ENCODE measurements at regions of chr17 and their contacts with region 1.

Region 1: GRCh38 chr17:57455063-57455914 is 199.0 kb downstream of the MSI2 start:
- DNase-seq: peak; percentile 94
- ATAC-seq: peak; percentile 91
- H3K4me3 ChIP-seq: no peak overlapping the region
- H3K27ac ChIP-seq: peak overlapping the region; percentile 98
- H3K4me1 ChIP-seq: peaks cover 73% of the 10 kb centered on the region
- H3K27me3 ChIP-seq: no peaks in the 10 kb centered on the region
- CTCF ChIP-seq: no peak
- EP300 ChIP-seq: peak; percentile 95 to 99
- POLR2A ChIP-seq: peak; percentile 59
- RAD21 ChIP-seq: peak; percentile 35

Region 2: DNA sequence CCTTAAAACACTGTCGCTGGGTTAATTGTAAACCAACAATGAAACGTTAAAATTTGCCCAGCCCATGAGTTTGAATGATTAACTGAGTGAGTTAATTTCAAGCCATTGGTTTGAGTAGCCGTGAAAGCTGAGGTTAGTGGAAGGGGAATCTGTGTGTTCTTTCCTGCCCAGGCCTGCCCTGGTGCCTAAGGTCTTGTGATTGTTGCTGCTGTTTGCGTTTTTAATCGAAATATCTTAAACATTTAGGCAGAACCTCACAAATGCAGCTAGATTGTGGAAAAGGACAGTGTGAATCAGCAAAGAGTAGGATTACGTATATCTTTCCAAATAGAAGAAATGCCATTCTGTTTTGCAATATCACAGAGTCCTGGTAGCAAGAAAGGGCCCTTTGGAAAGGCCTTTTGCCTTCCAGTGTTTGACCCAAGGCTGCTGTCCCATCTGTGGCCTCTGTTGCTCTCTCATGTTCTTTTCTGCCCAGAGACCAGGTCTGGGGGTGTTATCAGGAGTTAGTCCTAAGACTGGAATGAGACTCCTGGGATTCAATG is 85.2 kb before region 1 on chr17:
- CTCF ChIA-PET with region 1: interaction called, 8 read pairs
- POLR2A ChIA-PET with region 1: interaction called, 5 read pairs
- RAD21 ChIA-PET with region 1: interaction called, 6 read pairs
- SMC1A ChIA-PET with region 1: interaction called, 22 read pairs
- in situ Hi-C with region 1: no loop called
- intact Hi-C with region 1: no loop called
- DNase-seq: no peak
- ATAC-seq: peak; percentile 84
- H3K4me3 ChIP-seq: no peak overlapping the region
- H3K27ac ChIP-seq: peak overlapping the region; percentile 75
- H3K4me1 ChIP-seq: peaks cover 51% of the 10 kb centered on the region
- H3K27me3 ChIP-seq: no peaks in the 10 kb centered on the region
- CTCF ChIP-seq: no peak
- EP300 ChIP-seq: peak; percentile 47 to 88; a peak in 3 of 4 replicates
- POLR2A ChIP-seq: no peak
- RAD21 ChIP-seq: no peak

Region 3: DNA sequence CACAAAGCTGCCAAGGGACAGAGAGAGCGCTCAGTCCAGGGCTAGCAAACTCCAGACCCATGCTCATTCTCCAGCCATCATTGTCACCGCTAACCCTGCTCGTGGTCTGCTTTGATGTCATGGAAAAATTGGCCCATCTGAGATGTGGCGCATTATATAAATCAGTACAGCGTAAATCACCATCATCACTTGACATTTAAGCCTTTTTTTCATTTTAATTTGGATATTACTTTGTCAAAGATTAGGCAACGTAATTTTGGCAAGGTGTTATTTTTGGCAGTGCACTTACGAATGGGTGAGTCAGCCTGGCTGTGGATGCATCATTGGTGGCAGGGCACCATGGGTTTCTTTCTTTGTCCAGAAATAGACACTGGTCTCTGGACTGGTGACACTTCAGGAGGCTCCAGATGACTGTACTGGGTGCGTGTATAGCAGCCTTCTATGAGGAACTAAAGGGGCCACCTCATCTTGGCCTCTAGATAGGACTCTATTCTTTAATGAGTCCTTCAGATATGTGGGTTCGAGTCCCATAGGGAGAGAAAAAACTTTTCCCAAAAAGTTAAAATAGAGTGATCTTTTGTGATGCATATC is 32.6 kb before region 1 on chr17:
- CTCF ChIA-PET with region 1: interaction called, 5 read pairs
- POLR2A ChIA-PET with region 1: interaction called, 3 read pairs
- RAD21 ChIA-PET with region 1: interaction called, 10 read pairs
- SMC1A ChIA-PET with region 1: interaction called, 4 read pairs
- in situ Hi-C with region 1: no loop called
- intact Hi-C with region 1: no loop called
- DNase-seq: peak; percentile 77
- ATAC-seq: peak; percentile 95
- H3K4me3 ChIP-seq: no peak overlapping the region
- H3K27ac ChIP-seq: peak overlapping the region; percentile 59
- H3K4me1 ChIP-seq: peaks cover 69% of the 10 kb centered on the region
- H3K27me3 ChIP-seq: no peaks in the 10 kb centered on the region
- CTCF ChIP-seq: no peak
- EP300 ChIP-seq: peak in 1 of 2 experiments; percentile 26; a peak in 2 of 4 replicates
- POLR2A ChIP-seq: no peak
- RAD21 ChIP-seq: peak; percentile 14; the same call in 1 of the 2 replicates

Region 4: GRCh38 chr17:57468932-57469775 is 13.9 kb after region 1 on chr17:
- CTCF ChIA-PET with region 1: interaction called, 14 read pairs
- POLR2A ChIA-PET with region 1: interaction called, 8 read pairs
- RAD21 ChIA-PET with region 1: interaction called, 18 read pairs
- SMC1A ChIA-PET with region 1: interaction called, 33 read pairs
- in situ Hi-C with region 1: no loop called
- intact Hi-C with region 1: no loop called
- DNase-seq: peak; percentile 68
- ATAC-seq: peak; percentile 74
- H3K4me3 ChIP-seq: no peak overlapping the region
- H3K27ac ChIP-seq: peak overlapping the region; percentile 93
- H3K4me1 ChIP-seq: peaks cover 56% of the 10 kb centered on the region
- H3K27me3 ChIP-seq: no peaks in the 10 kb centered on the region
- CTCF ChIP-seq: no peak
- EP300 ChIP-seq: peak; percentile 57 to 84; a peak in 3 of 4 replicates
- POLR2A ChIP-seq: no peak
- RAD21 ChIP-seq: no peak

Region 5: DNA sequence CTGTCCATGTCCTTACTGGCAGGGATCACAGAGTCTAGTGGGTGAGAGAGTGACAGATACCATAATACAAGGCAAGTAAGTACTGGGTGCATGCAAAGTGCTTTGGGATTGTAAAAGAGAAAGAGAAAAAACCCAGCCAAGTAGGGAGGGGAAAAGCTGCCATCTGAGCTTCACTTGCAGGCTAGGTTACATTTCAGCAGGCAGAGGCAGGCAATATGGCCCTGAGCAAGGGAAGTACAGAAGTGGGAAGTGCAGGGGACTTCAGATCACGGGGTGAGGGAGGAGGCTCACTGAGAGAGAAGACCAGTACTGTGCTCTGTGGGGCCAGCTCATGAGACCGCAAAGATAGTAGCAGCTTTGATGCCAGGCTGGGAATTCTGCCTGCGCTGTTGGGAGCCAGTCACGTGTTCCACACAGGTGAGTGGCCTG is 31.6 kb after region 1 on chr17:
- CTCF ChIA-PET with region 1: interaction called, 6 read pairs
- POLR2A ChIA-PET with region 1: interaction called, 4 read pairs
- RAD21 ChIA-PET with region 1: interaction called, 21 read pairs
- SMC1A ChIA-PET with region 1: interaction called, 21 read pairs
- in situ Hi-C with region 1: no loop called
- intact Hi-C with region 1: no loop called
- DNase-seq: no peak
- ATAC-seq: peak; percentile 53
- H3K4me3 ChIP-seq: no peak overlapping the region
- H3K27ac ChIP-seq: peak overlapping the region; percentile 72
- H3K4me1 ChIP-seq: peaks cover 35% of the 10 kb centered on the region
- H3K27me3 ChIP-seq: no peaks in the 10 kb centered on the region
- CTCF ChIP-seq: no peak
- EP300 ChIP-seq: no peak
- POLR2A ChIP-seq: no peak
- RAD21 ChIP-seq: no peak

Region 6: GRCh38 chr17:57515656-57516211 is 60.4 kb after region 1 on chr17:
- CTCF ChIA-PET with region 1: no interaction called
- POLR2A ChIA-PET with region 1: no interaction called
- RAD21 ChIA-PET with region 1: interaction called, 3 read pairs
- SMC1A ChIA-PET with region 1: interaction called, 10 read pairs
- in situ Hi-C with region 1: no loop called
- intact Hi-C with region 1: no loop called
- DNase-seq: no peak
- ATAC-seq: no peak
- H3K4me3 ChIP-seq: no peak overlapping the region
- H3K27ac ChIP-seq: no peak overlapping the region
- H3K4me1 ChIP-seq: no peaks in the 10 kb centered on the region
- H3K27me3 ChIP-seq: no peaks in the 10 kb centered on the region
- CTCF ChIP-seq: no peak
- EP300 ChIP-seq: no peak
- POLR2A ChIP-seq: no peak
- RAD21 ChIP-seq: peak; percentile 44

Region 7: GRCh38 chr17:57528058-57528451 is 72.8 kb after region 1 on chr17:
- CTCF ChIA-PET with region 1: interaction called, 4 read pairs
- POLR2A ChIA-PET with region 1: interaction called, 3 read pairs
- RAD21 ChIA-PET with region 1: interaction called, 13 read pairs
- SMC1A ChIA-PET with region 1: interaction called, 7 read pairs
- in situ Hi-C with region 1: no loop called
- intact Hi-C with region 1: loop called (anchors 5 kb)
- DNase-seq: no peak
- ATAC-seq: no peak
- H3K4me3 ChIP-seq: no peak overlapping the region
- H3K27ac ChIP-seq: no peak overlapping the region
- H3K4me1 ChIP-seq: peaks cover 48% of the 10 kb centered on the region
- H3K27me3 ChIP-seq: no peaks in the 10 kb centered on the region
- CTCF ChIP-seq: no peak
- EP300 ChIP-seq: no peak
- POLR2A ChIP-seq: no peak
- RAD21 ChIP-seq: no peak

Measured in GM12878 (cell line).